ENCODE measurements at regions of chr1 and their contacts with region 1.

Region 1: GRCh38 chr1:91282695-91283420 is 121.8 kb downstream of the HFM1 start:
- DNase-seq: peak; percentile 59
- ATAC-seq: no peak
- H3K4me3 ChIP-seq: no peak overlapping the region
- H3K4me3 Mint-ChIP-seq: peak overlapping the region; percentile 15
- H3K27ac ChIP-seq: no peak overlapping the region
- H3K27ac Mint-ChIP-seq: no peak overlapping the region
- H3K4me1 ChIP-seq: no peaks in the 10 kb centered on the region
- H3K4me1 Mint-ChIP-seq: no peaks in the 10 kb centered on the region
- H3K27me3 ChIP-seq: no peaks in the 10 kb centered on the region
- H3K27me3 Mint-ChIP-seq: peaks cover 2% of the 10 kb centered on the region
- CTCF ChIP-seq: peak; percentile 88

Region 2: DNA sequence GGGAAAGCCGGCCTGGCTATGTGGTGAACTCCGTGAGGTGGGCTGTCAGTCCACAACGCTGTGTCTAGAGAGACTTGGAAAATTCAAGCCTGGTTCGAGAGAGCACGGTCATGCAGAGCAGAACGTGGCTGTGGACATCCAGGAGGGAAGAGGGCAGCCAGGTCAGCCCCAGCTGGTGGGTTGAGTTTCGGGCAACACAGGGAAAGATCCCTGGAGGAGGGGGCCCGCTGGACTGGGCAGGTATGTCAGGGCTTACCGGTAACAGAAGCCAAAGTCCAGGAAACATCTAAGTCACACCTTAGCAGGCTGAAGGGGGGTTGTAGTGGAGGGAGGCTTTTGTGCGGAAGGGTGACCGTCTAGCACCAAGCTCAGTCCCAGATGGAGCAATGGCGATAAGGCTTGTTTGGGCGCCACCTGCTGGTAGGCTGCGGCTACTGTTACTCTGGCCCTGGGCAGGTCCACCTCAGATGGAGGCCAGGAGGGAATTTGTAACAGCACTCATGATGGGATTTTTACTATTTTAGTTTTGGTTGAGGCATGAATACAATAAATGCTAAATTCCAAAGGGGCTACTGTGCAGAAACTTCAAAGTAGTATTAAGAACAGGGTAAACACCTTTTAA is 117.7 kb before region 1 on chr1:
- CTCF ChIA-PET with region 1: no interaction called
- POLR2A ChIA-PET with region 1: no interaction called
- intact Hi-C with region 1: no loop called
- DNase-seq: peak; percentile 73
- ATAC-seq: peak; percentile 82
- H3K4me3 ChIP-seq: no peak overlapping the region
- H3K4me3 Mint-ChIP-seq: no peak overlapping the region
- H3K27ac ChIP-seq: no peak overlapping the region
- H3K27ac Mint-ChIP-seq: no peak overlapping the region
- H3K4me1 ChIP-seq: peaks cover 0 to 4% of the 10 kb centered on the region in 2 donors
- H3K4me1 Mint-ChIP-seq: peaks cover 2% of the 10 kb centered on the region
- H3K27me3 ChIP-seq: no peaks in the 10 kb centered on the region
- H3K27me3 Mint-ChIP-seq: peaks cover 3% of the 10 kb centered on the region
- CTCF ChIP-seq: peak; percentile 95

Region 3: DNA sequence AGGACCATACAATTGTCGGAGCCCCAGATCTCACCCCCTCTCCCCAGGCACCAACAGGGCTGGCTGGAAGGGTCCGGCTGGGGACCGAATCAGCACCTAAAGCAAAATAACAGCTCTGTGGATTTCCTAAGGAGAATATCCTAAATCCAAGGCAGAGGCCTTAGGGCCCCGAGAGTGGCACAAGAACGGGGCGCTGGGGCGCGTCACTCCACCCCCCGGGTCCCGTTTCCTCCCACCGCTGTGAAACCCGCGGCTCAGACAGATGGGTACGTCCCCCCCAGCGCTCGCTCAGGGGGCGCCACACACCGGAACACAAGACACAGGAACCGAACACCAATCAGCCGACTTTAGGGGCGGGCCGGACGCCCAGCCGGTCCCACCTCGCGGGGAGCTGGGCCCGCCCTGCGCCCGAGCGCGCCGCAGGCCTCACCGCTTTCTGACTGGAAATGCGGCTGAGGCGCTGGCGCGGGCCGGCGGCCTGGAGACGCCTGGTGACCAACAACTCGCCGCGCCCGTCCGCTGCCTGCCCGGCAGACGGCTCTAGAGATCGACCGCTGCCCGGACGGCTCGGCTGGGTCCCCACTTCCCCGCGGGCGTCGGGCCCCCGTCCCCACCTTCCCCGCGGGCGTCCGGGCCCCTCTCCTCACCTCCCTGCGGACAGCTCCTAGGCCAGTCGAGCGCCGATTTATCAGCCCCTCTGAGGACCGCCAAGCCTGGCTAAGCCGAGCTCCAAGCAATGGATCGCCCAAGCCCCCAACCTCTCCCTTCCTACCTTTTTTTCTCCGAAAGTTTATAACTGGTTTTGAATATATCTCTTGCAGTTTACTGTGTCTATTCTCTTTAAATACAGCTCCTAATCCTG is 121.5 kb after region 1 on chr1 and contains the start of gene HFM1:
- CTCF ChIA-PET with region 1: interaction called, 3 read pairs
- POLR2A ChIA-PET with region 1: no interaction called
- intact Hi-C with region 1: loop called (anchors 5 kb)
- DNase-seq: peak; percentile 71
- ATAC-seq: peak; percentile 98
- H3K4me3 ChIP-seq: peak within 1 kb of the TSS in 3 of 5 experiments; percentile 43 to 60 (median 56)
- H3K4me3 Mint-ChIP-seq: peak within 1 kb of the TSS; percentile 86
- H3K27ac ChIP-seq: no peak within 1 kb of the TSS
- H3K27ac Mint-ChIP-seq: no peak within 1 kb of the TSS
- H3K4me1 ChIP-seq: peaks cover 10 to 16% of the 10 kb centered on the region in 2 donors
- H3K4me1 Mint-ChIP-seq: peaks cover 10% of the 10 kb centered on the region
- H3K27me3 ChIP-seq: peaks cover 0 to 22% (median 7%) of the 10 kb centered on the region in 4 experiments
- H3K27me3 Mint-ChIP-seq: peaks cover 34% of the 10 kb centered on the region
- CTCF ChIP-seq: no peak
- total RNA-seq, gene HFM1: 0.51 TPM in 1 of 2 replicates, not detected in the other

Region 4: GRCh38 chr1:91500756-91501522 is 218.1 kb after region 1 on chr1 and contains the start of gene CDC7:
- CTCF ChIA-PET with region 1: no interaction called
- POLR2A ChIA-PET with region 1: no interaction called
- intact Hi-C with region 1: loop called (anchors 10 kb)
- DNase-seq: peak; percentile 92
- ATAC-seq: peak; percentile 87
- H3K4me3 ChIP-seq: peak within 1 kb of the TSS; percentile 85 to 95 (median 90)
- H3K4me3 Mint-ChIP-seq: no peak within 1 kb of the TSS
- H3K27ac ChIP-seq: peak within 1 kb of the TSS; percentile 61 to 82
- H3K27ac Mint-ChIP-seq: no peak within 1 kb of the TSS
- H3K4me1 ChIP-seq: peaks cover 14 to 15% of the 10 kb centered on the region in 2 donors
- H3K4me1 Mint-ChIP-seq: peaks cover 17% of the 10 kb centered on the region
- H3K27me3 ChIP-seq: no peaks in the 10 kb centered on the region
- H3K27me3 Mint-ChIP-seq: no peaks in the 10 kb centered on the region
- CTCF ChIP-seq: peak; percentile 59
- total RNA-seq, gene CDC7: 7.4 and 8.7 TPM in 2 replicates

Region 5: DNA sequence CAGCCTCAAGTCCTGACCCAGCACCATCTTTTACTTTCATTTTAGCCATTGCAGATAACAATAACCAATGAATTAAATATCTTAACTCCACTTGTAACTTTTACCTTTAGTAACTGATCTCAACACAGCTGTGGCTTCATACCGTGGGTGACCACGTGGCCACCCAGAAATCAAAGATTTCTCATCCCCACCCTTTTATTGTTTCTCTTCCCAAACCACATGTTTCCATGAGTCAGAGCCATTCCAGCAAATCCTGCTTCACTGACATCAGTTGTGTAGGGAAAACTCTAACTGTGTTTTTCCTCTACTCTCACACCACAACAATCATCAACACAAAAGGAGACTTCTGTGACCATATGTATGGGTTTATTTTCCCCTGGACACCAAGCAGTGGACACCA is 641.3 kb after region 1 on chr1:
- CTCF ChIA-PET with region 1: interaction called, 93 read pairs
- POLR2A ChIA-PET with region 1: no interaction called
- intact Hi-C with region 1: no loop called
- DNase-seq: no peak
- ATAC-seq: no peak
- H3K4me3 ChIP-seq: no peak overlapping the region
- H3K4me3 Mint-ChIP-seq: no peak overlapping the region
- H3K27ac ChIP-seq: no peak overlapping the region
- H3K27ac Mint-ChIP-seq: no peak overlapping the region
- H3K4me1 ChIP-seq: no peaks in the 10 kb centered on the region
- H3K4me1 Mint-ChIP-seq: no peaks in the 10 kb centered on the region
- H3K27me3 ChIP-seq: no peaks in the 10 kb centered on the region
- H3K27me3 Mint-ChIP-seq: peaks cover 3% of the 10 kb centered on the region
- CTCF ChIP-seq: no peak

Region 6: GRCh38 chr1:92291372-92291999 is 1008.6 kb after region 1 on chr1:
- CTCF ChIA-PET with region 1: interaction called, 5 read pairs
- POLR2A ChIA-PET with region 1: no interaction called
- intact Hi-C with region 1: loop called (anchors 2 kb)
- DNase-seq: peak; percentile 20
- ATAC-seq: no peak
- H3K4me3 ChIP-seq: no peak overlapping the region
- H3K4me3 Mint-ChIP-seq: no peak overlapping the region
- H3K27ac ChIP-seq: no peak overlapping the region
- H3K27ac Mint-ChIP-seq: no peak overlapping the region
- H3K4me1 ChIP-seq: no peaks in the 10 kb centered on the region
- H3K4me1 Mint-ChIP-seq: peaks cover 4% of the 10 kb centered on the region
- H3K27me3 ChIP-seq: no peaks in the 10 kb centered on the region
- H3K27me3 Mint-ChIP-seq: no peaks in the 10 kb centered on the region
- CTCF ChIP-seq: peak; percentile 52

Region 7: DNA sequence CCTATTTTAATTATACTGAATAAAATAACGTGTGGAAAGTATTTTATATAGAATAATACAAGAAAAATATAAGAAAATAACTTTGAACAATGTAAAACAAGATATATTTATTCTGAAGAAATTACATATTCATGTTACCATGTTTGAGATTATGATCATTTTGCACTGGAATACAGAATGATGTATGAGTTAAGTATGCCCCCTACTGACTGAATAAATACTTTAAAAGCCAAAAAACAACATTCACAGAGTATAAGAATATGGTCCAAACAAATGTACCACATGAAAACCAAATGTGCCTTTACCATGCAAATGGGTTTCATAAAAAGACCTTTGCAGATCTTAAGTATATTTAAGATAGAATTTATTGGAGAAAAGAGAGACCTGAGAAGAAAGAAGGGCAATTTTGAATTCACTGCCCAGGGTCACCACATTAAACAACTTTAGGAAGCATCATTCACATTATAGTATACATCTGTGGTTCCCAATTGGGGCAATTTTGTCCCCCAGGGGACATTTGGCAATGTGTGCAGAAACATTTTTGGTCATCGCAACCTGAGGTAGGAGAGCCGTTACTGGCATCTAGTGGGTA is 1340.4 kb after region 1 on chr1:
- CTCF ChIA-PET with region 1: no interaction called
- POLR2A ChIA-PET with region 1: no interaction called
- intact Hi-C with region 1: loop called (anchors 5 kb)
- DNase-seq: peak; percentile 9
- ATAC-seq: no peak
- H3K4me3 ChIP-seq: no peak overlapping the region
- H3K4me3 Mint-ChIP-seq: no peak overlapping the region
- H3K27ac ChIP-seq: no peak overlapping the region
- H3K27ac Mint-ChIP-seq: no peak overlapping the region
- H3K4me1 ChIP-seq: no peaks in the 10 kb centered on the region
- H3K4me1 Mint-ChIP-seq: no peaks in the 10 kb centered on the region
- H3K27me3 ChIP-seq: no peaks in the 10 kb centered on the region
- H3K27me3 Mint-ChIP-seq: no peaks in the 10 kb centered on the region
- CTCF ChIP-seq: peak; percentile 65